Activated naive CD4-positive, alpha-beta T cell treated with anti-CD3 and anti-CD28 coated beads for 36 hours (primary cell): ENCODE measurements at regions of chr2 and their contacts with region 1.

Region 1: DNA sequence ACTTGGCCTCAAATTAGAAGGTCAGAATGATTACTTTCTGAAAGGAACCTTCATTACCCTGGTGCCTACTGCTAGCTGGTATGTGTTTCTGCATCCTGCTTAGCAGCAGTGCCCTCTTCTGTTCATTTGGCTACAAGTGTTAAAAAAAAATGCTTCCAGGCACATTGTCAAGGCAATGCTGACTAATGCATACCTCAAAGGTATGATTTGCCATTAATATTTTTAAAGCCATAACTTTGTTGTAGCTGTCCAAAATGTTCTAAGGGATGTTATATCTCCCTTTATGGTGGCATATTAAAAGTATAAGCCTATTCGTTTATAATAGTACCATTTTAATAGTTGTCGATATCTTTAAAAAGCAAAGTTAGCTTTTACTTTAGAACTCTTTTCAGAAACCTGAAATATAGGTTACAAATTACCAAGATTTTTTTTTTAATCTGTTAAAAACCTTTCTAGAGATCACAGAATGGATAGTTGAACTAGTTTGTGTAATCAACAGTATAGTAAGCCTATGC is 52.0 kb upstream of the FAM171B start:
- DNase-seq: peak; percentile 55
- H3K4me3 Mint-ChIP-seq: no peak overlapping the region
- H3K27ac Mint-ChIP-seq: no peak overlapping the region
- H3K4me1 Mint-ChIP-seq: peaks cover 24% of the 10 kb centered on the region
- H3K27me3 Mint-ChIP-seq: no peaks in the 10 kb centered on the region

Region 2: GRCh38 chr2:185990861-185991525 is 650.9 kb before region 1 on chr2:
- CTCF ChIA-PET with region 1: interaction called, 5 read pairs
- intact Hi-C with region 1: loop called (anchors 10 kb)
- DNase-seq: no peak
- H3K4me3 Mint-ChIP-seq: no peak overlapping the region
- H3K27ac Mint-ChIP-seq: no peak overlapping the region
- H3K4me1 Mint-ChIP-seq: no peaks in the 10 kb centered on the region
- H3K27me3 Mint-ChIP-seq: no peaks in the 10 kb centered on the region

Region 3: GRCh38 chr2:186426153-186427016 is 215.5 kb before region 1 on chr2:
- CTCF ChIA-PET with region 1: no interaction called
- intact Hi-C with region 1: loop called (anchors 5 kb)
- DNase-seq: peak; percentile 31
- H3K4me3 Mint-ChIP-seq: no peak overlapping the region
- H3K27ac Mint-ChIP-seq: no peak overlapping the region
- H3K4me1 Mint-ChIP-seq: peaks cover 23% of the 10 kb centered on the region
- H3K27me3 Mint-ChIP-seq: no peaks in the 10 kb centered on the region

Region 4: GRCh38 chr2:186485871-186486650 is 155.8 kb before region 1 on chr2 and contains the start of gene ZC3H15:
- CTCF ChIA-PET with region 1: no interaction called
- intact Hi-C with region 1: loop called (anchors 1 kb)
- DNase-seq: peak; percentile 96
- H3K4me3 Mint-ChIP-seq: peak within 1 kb of the TSS; percentile 98
- H3K27ac Mint-ChIP-seq: peak within 1 kb of the TSS; percentile 98
- H3K4me1 Mint-ChIP-seq: peaks cover 60% of the 10 kb centered on the region
- H3K27me3 Mint-ChIP-seq: no peaks in the 10 kb centered on the region
- total RNA-seq, gene ZC3H15: 92.2 to 93.3 TPM

Region 5: GRCh38 chr2:186503848-186504606 is 137.8 kb before region 1 on chr2:
- CTCF ChIA-PET with region 1: interaction called, 75 read pairs
- intact Hi-C with region 1: loop called (anchors 1 kb)
- DNase-seq: no peak
- H3K4me3 Mint-ChIP-seq: no peak overlapping the region
- H3K27ac Mint-ChIP-seq: peak overlapping the region; percentile 46
- H3K4me1 Mint-ChIP-seq: peaks cover 9% of the 10 kb centered on the region
- H3K27me3 Mint-ChIP-seq: no peaks in the 10 kb centered on the region

Region 6: GRCh38 chr2:186575302-186575701 is 66.6 kb before region 1 on chr2:
- CTCF ChIA-PET with region 1: no interaction called
- intact Hi-C with region 1: loop called (anchors 2 kb)
- DNase-seq: peak; percentile 7
- H3K4me3 Mint-ChIP-seq: no peak overlapping the region
- H3K27ac Mint-ChIP-seq: no peak overlapping the region
- H3K4me1 Mint-ChIP-seq: peaks cover 3% of the 10 kb centered on the region
- H3K27me3 Mint-ChIP-seq: no peaks in the 10 kb centered on the region

Region 7: DNA sequence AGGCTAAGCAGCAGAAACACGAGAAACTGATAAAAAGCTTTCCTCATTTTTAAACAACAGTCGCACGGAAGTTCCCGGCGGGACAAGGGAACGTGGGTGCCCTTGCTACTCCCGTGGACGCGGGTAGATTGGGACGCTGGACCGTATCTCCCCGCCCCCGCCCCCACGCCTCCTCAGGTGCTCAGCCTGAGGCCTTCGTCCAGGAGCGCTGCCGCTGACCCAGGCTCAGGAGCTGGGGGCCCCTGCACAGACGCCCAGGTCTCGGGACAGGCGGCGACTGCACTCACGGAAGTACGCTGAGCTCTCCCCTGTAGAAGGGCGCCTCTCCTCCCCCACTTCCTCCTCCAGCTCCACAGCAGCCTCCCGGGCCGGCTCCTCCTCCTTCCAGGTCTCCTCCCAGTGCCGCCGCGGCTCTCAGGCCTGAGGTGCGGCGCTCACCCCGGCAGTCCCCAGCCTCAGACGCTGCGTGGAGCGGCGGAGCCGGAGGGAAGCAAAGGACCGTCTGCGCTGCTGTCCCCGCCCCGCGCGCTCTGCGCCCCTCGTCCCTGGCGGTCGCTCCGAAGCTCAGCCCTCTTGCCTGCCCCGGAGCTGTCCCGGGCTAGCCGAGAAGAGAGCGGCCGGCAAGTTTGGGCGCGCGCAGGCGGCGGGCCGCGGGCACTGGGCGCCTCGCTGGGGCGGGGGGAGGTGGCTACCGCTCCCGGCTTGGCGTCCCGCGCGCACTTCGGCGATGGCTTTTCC is 52.1 kb before region 1 on chr2 and contains the start of gene ITGAV:
- CTCF ChIA-PET with region 1: interaction called, 12 read pairs
- intact Hi-C with region 1: loop called (anchors 1 kb)
- DNase-seq: peak; percentile 88
- H3K4me3 Mint-ChIP-seq: peak within 1 kb of the TSS; percentile 84
- H3K27ac Mint-ChIP-seq: peak within 1 kb of the TSS; percentile 71
- H3K4me1 Mint-ChIP-seq: peaks cover 23% of the 10 kb centered on the region
- H3K27me3 Mint-ChIP-seq: no peaks in the 10 kb centered on the region
- total RNA-seq, gene ITGAV: 4.5 to 5.0 TPM